BJ (cell line): ENCODE measurements at regions of chr17 and their contacts with region 1.

Region 1: DNA sequence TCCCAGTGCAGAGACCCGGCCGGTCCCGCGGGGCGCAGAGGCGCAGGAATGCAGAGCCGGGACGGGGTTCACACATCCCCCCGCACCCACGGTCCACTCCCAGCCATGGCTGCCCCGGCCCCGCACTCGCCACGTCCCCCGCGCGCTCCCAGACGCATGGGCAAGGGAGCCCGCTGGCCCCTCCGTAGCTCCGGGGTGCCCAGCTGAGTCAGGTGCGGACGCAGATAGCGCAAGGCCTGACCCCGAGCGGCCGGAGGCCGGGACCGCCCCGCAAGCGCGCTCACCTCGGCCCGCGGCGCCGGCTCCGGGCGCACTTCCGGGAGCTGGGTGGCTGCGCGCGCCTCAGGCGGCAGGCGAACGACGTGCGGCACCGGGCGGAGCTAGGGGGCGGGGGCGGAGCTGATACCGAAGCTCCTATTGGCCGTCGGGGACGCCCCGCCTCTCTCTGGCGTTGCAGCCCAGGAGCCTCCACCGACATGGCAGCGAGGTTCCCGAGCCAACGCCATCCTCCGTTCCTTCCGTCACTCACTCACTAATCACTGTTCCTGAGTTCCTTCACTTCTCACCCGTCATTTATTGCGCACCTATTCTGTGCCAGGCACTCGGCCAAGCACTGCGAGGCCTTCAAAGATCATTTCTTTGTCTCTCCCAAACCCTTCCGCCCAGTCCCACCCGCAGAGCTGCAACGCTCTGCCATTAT is at the start of gene ZNF18:
- DNase-seq: peak; percentile 58
- H3K4me3 ChIP-seq: peak within 1 kb of the TSS; percentile 95
- H3K27me3 ChIP-seq: no peaks in the 10 kb centered on the region
- CTCF ChIP-seq: no peak
- polyA plus RNA-seq, gene ZNF18: 6.2 and 6.9 TPM in 2 replicates

Region 2: DNA sequence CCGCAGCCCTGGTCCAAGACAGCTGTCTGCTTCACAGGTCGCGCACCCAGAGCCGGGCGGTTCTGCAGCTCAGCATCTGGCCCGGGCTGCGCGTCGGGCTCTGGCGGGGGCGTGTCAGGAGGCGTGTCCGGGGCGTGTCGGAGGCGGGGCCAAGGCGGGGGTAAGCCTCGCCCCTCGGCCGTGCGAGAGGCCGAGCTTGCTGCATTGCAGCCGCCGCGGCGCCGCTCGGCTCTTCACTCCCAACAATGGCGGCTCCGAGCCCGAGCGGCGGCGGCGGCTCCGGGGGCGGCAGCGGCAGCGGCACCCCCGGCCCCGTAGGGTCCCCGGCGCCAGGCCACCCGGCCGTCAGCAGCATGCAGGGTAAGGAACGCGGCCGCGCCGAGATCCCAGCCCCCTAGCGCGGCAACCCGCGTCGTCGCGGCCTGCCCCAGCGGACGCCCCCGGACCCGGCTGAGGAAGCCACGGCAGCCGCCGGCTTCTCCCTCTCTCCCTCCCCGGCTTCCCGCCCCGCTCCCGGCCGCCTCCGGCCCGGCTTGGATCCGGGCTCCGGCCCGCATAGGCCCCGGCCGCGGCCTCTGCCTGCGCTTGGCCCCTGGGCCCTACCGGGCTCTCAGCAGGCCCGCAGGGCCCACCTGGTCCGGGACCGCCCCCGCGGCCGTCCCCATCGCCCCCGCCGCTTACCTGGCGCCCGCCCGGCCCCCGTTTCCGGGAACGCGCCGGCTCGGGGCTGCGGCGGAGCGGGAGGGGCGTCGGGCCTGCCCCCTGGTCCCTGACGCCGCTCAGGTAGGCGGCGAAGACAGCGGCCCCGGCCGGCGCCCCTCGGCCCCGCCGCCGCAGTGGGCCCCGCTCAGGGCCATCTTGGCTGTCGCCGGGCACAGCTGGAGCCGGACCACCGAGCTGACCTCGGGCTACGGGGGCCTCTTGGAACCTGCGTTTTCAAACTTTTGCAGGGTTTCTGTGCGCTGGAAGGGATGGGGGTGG is 23.6 kb after region 1 on chr17 and contains the start of gene MAP2K4:
- CTCF ChIA-PET with region 1: interaction called, 4 read pairs
- POLR2A ChIA-PET with region 1: interaction called, 13 read pairs
- DNase-seq: peak; percentile 41
- H3K4me3 ChIP-seq: peak within 1 kb of the TSS; percentile 74
- H3K27me3 ChIP-seq: no peaks in the 10 kb centered on the region; the same call in 1 of the 2 replicates
- CTCF ChIP-seq: no peak
- polyA plus RNA-seq, gene MAP2K4: 12.8 and 22.5 TPM in 2 replicates